Sciatic nerve (tissue), 2 donors: ENCODE measurements at regions of chr11 and their contacts with region 1.

Region 1: GRCh38 chr11:130261571-130261970 is 53.1 kb downstream of the ZBTB44 start:
- DNase-seq: no peak
- ATAC-seq: no peak

Region 2: GRCh38 chr11:129067454-129067853 is 1194.1 kb before region 1 on chr11:
- intact Hi-C with region 1: loop called (anchors 5 kb)
- DNase-seq: no peak
- ATAC-seq: no peak

Region 3: GRCh38 chr11:129695575-129696308 is 565.8 kb before region 1 on chr11:
- intact Hi-C with region 1: no loop called
- DNase-seq: no peak
- ATAC-seq: peak; percentile 63

Region 4: DNA sequence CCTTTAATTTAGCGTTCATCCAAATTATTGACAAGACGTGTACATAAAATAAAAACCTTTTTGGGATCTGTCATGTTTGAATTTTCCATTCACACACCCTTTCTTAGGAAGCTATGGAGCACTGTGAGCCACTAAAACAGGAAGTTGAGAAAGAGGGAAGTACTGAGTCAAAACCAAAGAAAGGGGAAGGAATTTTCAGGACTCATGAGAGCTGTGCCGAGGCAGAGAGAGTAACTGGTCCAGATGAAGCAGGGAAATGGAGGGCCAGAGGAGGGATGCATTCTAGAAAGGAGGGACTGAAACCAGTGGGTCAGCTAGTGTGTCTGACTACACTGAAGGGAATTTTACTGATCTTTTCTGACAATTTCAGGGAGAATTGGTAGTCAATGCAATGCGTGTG is 167.0 kb before region 1 on chr11:
- intact Hi-C with region 1: no loop called
- DNase-seq: no peak
- ATAC-seq: peak; percentile 59